Heart right ventricle (tissue), 16 donors: ENCODE measurements at regions of chr17 and their contacts with region 1.

Region 1: GRCh38 chr17:1684378-1685189 is at the start of gene PRPF8:
- DNase-seq: peak; percentile 98
- ATAC-seq: peak; percentile 99 to 100 (median 100)
- H3K4me3 ChIP-seq: peak within 1 kb of the TSS; percentile 48 to 98 (median 86)
- H3K27ac ChIP-seq: peak within 1 kb of the TSS; percentile 81 to 98 (median 95)
- H3K4me1 ChIP-seq: peaks cover 0 to 28% (median 24%) of the 10 kb centered on the region in 9 donors
- H3K27me3 ChIP-seq: no peaks in the 10 kb centered on the region
- CTCF ChIP-seq: peak in 1 of 9 donors; percentile 3
- total RNA-seq, gene PRPF8: 137 to 205 (median 179) TPM

Region 2: GRCh38 chr17:1516388-1517161 is 168.0 kb before region 1 on chr17 and contains the start of gene INPP5K:
- intact Hi-C with region 1: no loop called
- DNase-seq: peak; percentile 98
- ATAC-seq: peak; percentile 96 to 99 (median 97)
- H3K4me3 ChIP-seq: peak within 1 kb of the TSS; percentile 81 to 100 (median 94)
- H3K27ac ChIP-seq: peak within 1 kb of the TSS; percentile 86 to 97 (median 92)
- H3K4me1 ChIP-seq: peaks cover 18 to 59% (median 50%) of the 10 kb centered on the region in 9 donors
- H3K27me3 ChIP-seq: no peaks in the 10 kb centered on the region
- CTCF ChIP-seq: peak in 1 of 9 donors; percentile 14
- total RNA-seq, gene INPP5K: 26.8 to 41.2 (median 32.7) TPM

Region 3: GRCh38 chr17:1648963-1649843 is 35.4 kb before region 1 on chr17:
- intact Hi-C with region 1: no loop called
- DNase-seq: peak; percentile 93 to 97
- ATAC-seq: peak; percentile 34 to 77 (median 62)
- H3K4me3 ChIP-seq: peak overlapping the region; percentile 56 to 94 (median 81)
- H3K27ac ChIP-seq: peak overlapping the region; percentile 97 to 100 (median 99)
- H3K4me1 ChIP-seq: peaks cover 34 to 61% (median 55%) of the 10 kb centered on the region in 9 donors
- H3K27me3 ChIP-seq: no peaks in the 10 kb centered on the region
- CTCF ChIP-seq: peak; percentile 75 to 95 (median 88)

Region 4: DNA sequence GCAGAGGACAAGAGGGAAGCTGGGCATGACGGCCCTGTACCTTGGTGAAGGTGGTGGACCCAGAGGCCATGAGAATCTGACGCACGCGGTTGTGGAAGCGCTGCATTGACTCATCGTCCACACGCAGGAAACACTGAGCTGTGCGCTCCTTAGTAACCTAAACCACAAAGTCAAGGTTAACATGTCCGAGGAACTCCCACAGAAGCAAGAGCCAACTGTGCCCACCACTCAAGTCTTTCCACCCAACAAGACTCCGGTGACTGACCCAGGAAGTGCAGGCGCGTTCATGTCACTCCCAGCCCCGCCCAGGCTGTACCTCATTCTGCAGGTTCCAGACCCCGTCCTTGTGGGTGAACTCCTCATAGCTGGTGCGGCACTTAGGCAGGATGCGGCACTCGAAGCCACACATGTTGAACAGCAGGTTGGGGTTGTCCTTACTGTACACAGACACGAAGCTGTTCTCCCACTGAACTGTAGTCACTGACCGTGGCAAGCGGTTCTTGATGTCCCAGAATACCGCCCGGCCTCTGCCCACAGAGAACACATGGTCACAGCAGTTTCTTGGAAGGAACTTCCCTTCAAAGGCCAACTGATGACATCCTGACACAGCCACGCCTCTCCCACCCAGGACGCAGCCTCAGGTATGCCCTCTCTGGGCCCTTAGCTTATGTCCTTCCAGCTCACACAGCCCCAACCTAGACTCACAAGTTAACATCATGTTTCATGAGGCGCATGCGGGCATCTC is 11.4 kb before region 1 on chr17:
- intact Hi-C with region 1: loop called in 1 of 10 experiments (anchors 2 kb)
- DNase-seq: no peak
- ATAC-seq: no peak
- H3K4me3 ChIP-seq: no peak overlapping the region
- H3K27ac ChIP-seq: no peak overlapping the region
- H3K4me1 ChIP-seq: peaks cover 0 to 28% (median 14%) of the 10 kb centered on the region in 9 donors
- H3K27me3 ChIP-seq: no peaks in the 10 kb centered on the region
- CTCF ChIP-seq: no peak

Region 5: GRCh38 chr17:1709971-1710806 is 25.6 kb after region 1 on chr17 and contains the start of gene TLCD2:
- intact Hi-C with region 1: loop called in 3 of 10 experiments (anchors 1 to 5 kb)
- DNase-seq: peak; percentile 74 to 81
- ATAC-seq: peak; percentile 35 to 58 (median 42)
- H3K4me3 ChIP-seq: peak within 1 kb of the TSS; percentile 64 to 88 (median 78)
- H3K27ac ChIP-seq: peak within 1 kb of the TSS in 9 of 10 donors; percentile 76 to 99 (median 84)
- H3K4me1 ChIP-seq: peaks cover 10 to 60% (median 46%) of the 10 kb centered on the region in 9 donors
- H3K27me3 ChIP-seq: peaks cover 0 to 11% (median 0%) of the 10 kb centered on the region in 7 donors
- CTCF ChIP-seq: no peak
- total RNA-seq, gene TLCD2: 0.96 to 6.0 (median 1.9) TPM

Region 6: DNA sequence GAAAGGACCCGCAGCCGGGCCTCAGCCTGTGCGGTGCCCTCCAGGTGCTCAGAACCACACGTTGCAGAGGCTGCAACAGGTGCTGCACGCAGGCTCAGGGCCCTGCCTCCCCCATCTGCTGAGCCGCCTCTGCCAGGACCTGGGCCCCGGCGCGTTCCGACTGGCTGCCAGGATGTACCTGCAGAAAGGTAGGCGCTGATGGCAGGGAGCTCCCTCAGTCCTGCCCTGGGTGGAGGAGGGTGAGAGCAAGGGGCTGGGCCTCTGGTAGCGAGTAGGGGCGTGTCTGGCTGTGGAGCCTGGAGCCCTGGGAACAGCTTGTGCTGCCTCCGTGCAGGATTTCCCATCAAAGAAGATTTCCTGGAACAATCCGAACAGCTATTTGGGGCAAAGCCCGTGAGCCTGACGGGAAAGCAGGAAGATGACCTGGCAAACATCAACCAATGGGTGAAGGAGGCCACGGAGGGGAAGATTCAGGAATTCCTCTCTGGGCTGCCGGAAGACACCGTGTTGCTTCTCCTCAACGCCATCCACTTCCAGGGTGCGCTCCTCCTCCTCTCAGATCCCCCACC is 62.5 kb after region 1 on chr17:
- intact Hi-C with region 1: no loop called
- DNase-seq: no peak
- ATAC-seq: peak in 7 of 8 donors; percentile 48 to 88 (median 85)
- H3K4me3 ChIP-seq: no peak overlapping the region
- H3K27ac ChIP-seq: peak overlapping the region in 6 of 10 donors; percentile 11 to 73 (median 61)
- H3K4me1 ChIP-seq: peaks cover 0 to 12% (median 0%) of the 10 kb centered on the region in 9 donors
- H3K27me3 ChIP-seq: no peaks in the 10 kb centered on the region
- CTCF ChIP-seq: no peak